ENCODE measurements at regions of chr11 and their contacts with region 1.

Region 1: GRCh38 chr11:128522055-128522942 is 65.1 kb downstream of the ETS1 start:
- DNase-seq: peak; percentile 97
- H3K4me3 Mint-ChIP-seq: peak overlapping the region; percentile 93
- H3K27ac Mint-ChIP-seq: peak overlapping the region; percentile 99
- H3K4me1 Mint-ChIP-seq: peaks cover 54% of the 10 kb centered on the region
- H3K27me3 Mint-ChIP-seq: no peaks in the 10 kb centered on the region

Region 2: GRCh38 chr11:128323381-128323780 is 198.9 kb before region 1 on chr11:
- intact Hi-C with region 1: loop called (anchors 1 kb)
- DNase-seq: peak; percentile 87
- H3K4me3 Mint-ChIP-seq: peak overlapping the region; percentile 69
- H3K27ac Mint-ChIP-seq: peak overlapping the region; percentile 97
- H3K4me1 Mint-ChIP-seq: peaks cover 79% of the 10 kb centered on the region
- H3K27me3 Mint-ChIP-seq: no peaks in the 10 kb centered on the region

Region 3: DNA sequence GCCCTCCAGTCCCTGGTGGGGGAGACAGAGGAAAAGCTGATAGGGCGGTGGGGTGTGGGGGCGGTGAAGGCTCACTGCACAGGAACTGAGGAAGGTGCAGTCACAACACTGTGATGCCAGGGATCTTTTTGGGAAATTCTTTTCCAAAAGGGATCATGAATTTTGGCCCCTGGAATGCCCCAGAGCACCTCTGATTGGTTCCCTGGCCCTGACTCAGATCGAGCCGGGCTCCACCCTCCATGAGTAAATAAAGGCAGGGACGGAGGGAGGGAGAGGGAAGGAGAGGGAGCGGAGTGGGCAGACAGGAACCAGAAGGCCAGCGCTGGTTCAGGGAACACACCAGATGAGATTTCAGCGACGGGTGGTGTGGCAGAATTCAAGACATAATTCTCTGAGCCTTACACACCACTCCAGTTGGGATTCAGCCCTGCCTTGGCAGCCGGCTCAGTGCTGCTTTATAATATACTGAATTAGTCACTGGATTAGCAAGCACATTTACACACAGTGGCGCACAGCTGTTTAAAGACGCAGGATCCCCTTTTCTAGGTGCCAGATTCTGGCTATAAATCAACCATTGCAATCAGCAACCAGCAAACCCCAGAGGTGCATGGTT is 15.2 kb before region 1 on chr11:
- intact Hi-C with region 1: loop called (anchors 1 kb)
- DNase-seq: peak; percentile 78
- H3K4me3 Mint-ChIP-seq: peak overlapping the region; percentile 93
- H3K27ac Mint-ChIP-seq: peak overlapping the region; percentile 98
- H3K4me1 Mint-ChIP-seq: peaks cover 93% of the 10 kb centered on the region
- H3K27me3 Mint-ChIP-seq: no peaks in the 10 kb centered on the region

Region 4: GRCh38 chr11:128568166-128568778 is 46.0 kb after region 1 on chr11:
- intact Hi-C with region 1: no loop called
- DNase-seq: no peak
- H3K4me3 Mint-ChIP-seq: no peak overlapping the region
- H3K27ac Mint-ChIP-seq: no peak overlapping the region
- H3K4me1 Mint-ChIP-seq: peaks cover 13% of the 10 kb centered on the region
- H3K27me3 Mint-ChIP-seq: no peaks in the 10 kb centered on the region

Region 5: DNA sequence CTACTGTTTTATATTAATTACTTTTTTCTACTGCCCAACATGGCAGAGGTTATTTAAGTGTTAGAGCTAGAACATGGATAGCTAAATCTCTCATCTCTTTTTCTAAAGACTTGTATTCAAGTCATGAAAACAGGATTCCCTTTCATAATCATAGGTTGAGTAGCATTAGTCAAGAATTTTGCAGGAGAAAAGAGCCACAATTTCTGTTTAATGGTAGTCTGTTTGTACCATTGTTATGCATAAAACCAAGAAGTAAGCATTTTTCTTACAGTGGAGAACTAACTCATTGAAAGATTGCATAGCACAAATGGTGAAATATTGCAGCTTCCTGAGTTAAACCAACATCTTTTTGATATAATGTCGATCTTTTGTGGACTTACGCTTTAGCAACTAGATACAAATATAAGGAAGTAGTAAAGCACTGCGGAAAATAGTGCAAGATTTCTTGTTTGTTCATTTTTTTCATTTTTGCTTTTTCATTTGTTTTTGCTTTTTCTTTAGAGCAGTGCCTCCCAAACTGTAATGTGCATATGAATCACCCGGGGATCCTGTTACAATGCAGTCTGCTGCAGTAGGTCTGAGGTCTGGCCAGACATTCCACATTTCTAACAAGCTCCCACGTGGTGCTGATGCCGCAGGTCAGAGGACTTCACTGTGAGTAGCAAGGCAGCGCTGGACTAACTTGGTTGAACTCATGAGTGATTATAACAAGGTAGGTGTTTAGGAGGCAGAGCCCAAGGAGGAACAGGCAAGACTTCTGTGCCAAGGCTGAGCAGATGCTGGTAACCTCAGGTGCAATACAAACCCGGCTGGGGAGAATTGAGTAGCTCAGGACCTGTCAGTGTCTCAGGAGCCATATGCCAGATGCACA is 60.4 kb after region 1 on chr11:
- intact Hi-C with region 1: loop called (anchors 1 kb)
- DNase-seq: no peak
- H3K4me3 Mint-ChIP-seq: peak overlapping the region; percentile 59
- H3K27ac Mint-ChIP-seq: peak overlapping the region; percentile 81
- H3K4me1 Mint-ChIP-seq: peaks cover 35% of the 10 kb centered on the region
- H3K27me3 Mint-ChIP-seq: peaks cover 7% of the 10 kb centered on the region

Region 6: GRCh38 chr11:128733440-128734102 is 211.3 kb after region 1 on chr11:
- intact Hi-C with region 1: loop called (anchors 10 kb)
- DNase-seq: peak; percentile 81
- H3K4me3 Mint-ChIP-seq: peak overlapping the region; percentile 72
- H3K27ac Mint-ChIP-seq: peak overlapping the region; percentile 83
- H3K4me1 Mint-ChIP-seq: peaks cover 77% of the 10 kb centered on the region
- H3K27me3 Mint-ChIP-seq: no peaks in the 10 kb centered on the region

Region 7: DNA sequence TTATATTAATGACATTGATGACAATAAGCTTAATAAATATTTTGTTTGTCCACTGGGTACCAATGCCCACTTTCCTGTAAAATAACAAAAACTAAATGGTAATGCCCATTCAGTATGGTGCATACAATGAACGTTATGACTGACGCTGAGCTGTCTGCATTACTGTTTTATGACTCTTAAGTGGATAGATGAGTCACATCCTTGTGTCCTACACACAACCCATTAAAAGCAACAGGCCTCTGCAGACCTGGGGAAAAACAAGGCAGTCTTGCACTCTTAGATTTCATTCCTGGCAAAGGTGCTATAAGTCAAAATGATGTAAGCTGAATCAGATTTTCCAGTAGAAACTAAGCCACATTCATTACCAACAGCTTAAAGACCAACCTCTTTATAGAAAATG is 1117.0 kb after region 1 on chr11:
- intact Hi-C with region 1: loop called (anchors 10 kb)
- DNase-seq: peak; percentile 73
- H3K4me3 Mint-ChIP-seq: peak overlapping the region; percentile 42
- H3K27ac Mint-ChIP-seq: peak overlapping the region; percentile 87
- H3K4me1 Mint-ChIP-seq: peaks cover 70% of the 10 kb centered on the region
- H3K27me3 Mint-ChIP-seq: no peaks in the 10 kb centered on the region

Measured in activated CD4-positive, alpha-beta T cell treated with anti-CD3 and anti-CD28 coated beads, Interleukin-2, amount 10 ng/mL, durations not matched to agents 24 days and 14 days (primary cell).